ENCODE measurements at regions of chr12 and their contacts with region 1.

Region 1: GRCh38 chr12:25241167-25242020 is 9.3 kb downstream of the KRAS start:
- DNase-seq: no peak
- ATAC-seq: peak in 2 of 8 donors; percentile 42 to 49
- H3K4me3 ChIP-seq: no peak overlapping the region
- H3K27ac ChIP-seq: no peak overlapping the region
- H3K4me1 ChIP-seq: peaks cover 0 to 11% (median 0%) of the 10 kb centered on the region in 9 donors
- H3K27me3 ChIP-seq: no peaks in the 10 kb centered on the region
- CTCF ChIP-seq: peak; percentile 44 to 80 (median 74)

Region 2: DNA sequence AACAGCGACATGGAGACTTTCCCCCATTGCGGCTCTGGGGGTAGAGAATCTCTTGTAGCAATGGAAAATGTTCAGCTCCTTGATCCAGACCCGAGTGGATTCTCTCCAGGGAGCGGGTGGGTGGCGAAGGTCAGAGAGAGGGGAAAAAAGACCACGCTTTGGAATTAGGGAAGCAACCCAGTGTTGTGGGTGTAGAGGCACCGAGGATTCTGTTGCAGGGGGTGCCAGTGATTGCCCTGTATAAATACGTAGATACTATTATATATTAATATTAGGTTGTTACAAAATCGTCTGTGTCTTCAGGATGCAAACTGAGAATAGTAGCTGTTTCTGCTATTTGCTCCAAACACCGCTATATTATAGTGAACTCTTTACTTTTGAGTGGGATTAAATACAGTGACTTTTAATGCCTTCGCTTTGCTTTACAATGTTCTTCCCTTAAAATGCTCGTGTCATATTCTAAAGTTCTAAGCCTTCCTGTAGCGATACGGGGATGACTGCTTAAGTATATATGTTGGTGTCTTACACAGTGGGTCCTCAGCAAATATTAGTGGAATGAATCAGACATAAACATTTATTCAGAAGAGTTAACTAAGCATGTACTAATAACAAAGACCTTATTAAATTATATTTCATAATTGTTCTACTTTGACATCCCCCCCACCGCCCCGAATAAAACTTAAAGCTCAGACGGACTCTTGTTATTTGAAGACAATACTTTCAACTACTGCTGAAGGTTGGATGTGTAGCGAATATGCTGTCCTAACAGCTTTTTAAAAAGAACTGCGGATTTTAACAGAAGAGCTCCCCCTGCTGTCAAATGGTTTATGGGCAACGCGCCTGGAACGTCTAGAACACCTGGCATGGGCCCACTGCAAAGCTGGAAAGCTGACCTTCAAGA is 145.7 kb after region 1 on chr12:
- intact Hi-C with region 1: loop called in 3 of 10 experiments (anchors 1 to 5 kb)
- DNase-seq: peak; percentile 73 to 90
- ATAC-seq: peak; percentile 15 to 72 (median 54)
- H3K4me3 ChIP-seq: peak overlapping the region; percentile 26 to 82 (median 66)
- H3K27ac ChIP-seq: peak overlapping the region; percentile 95 to 100 (median 100)
- H3K4me1 ChIP-seq: peaks cover 0 to 25% (median 8%) of the 10 kb centered on the region in 9 donors
- H3K27me3 ChIP-seq: no peaks in the 10 kb centered on the region
- CTCF ChIP-seq: peak; percentile 76 to 93 (median 84)